ENCODE measurements at regions of chr7 and their contacts with region 1.

Region 1: DNA sequence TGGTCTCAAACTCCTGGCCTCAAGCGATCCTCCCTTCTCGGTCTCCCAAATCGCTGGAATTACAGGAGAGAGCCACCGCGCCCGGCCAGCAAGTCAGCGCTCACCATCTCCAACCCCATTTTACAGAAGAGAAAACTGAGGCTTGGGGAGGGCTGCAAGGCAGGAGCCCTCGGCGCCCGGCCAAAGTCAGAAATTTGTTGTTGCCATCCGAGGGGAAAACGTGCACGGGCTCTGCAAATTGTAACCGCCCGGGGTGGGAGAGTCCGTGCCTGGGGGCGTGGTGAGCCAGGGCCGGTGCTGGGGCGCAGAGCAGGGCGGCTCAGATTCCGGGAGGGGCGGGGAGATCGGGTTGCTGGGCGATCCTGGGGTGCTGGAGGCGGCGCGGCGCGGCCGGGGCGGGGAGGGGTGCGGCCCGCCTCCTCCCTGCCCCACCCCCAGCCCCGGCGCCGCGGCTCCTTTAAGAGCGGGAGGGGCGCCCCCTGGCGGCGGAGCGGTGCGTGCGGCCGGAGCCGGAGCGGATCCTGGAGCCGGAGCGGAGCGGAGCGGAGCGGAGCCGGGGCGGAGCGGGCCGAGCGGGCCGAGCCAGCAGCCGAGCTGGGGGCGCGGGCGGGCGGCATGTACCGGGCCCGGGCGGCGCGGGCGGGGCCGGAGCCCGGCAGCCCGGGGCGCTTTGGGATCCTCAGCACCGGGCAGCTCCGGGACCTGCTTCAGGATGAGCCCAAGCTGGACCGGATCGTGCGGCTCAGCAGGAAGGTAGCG is at the start of gene VPS37D:
- DNase-seq: peak; percentile 97 to 99 (median 99)
- ATAC-seq: peak; percentile 96
- H3K4me3 ChIP-seq: peak within 1 kb of the TSS; percentile 53
- H3K27ac ChIP-seq: no peak within 1 kb of the TSS
- H3K4me1 ChIP-seq: peaks cover 9 to 42% of the 10 kb centered on the region in 2 experiments
- H3K27me3 ChIP-seq: no peaks in the 10 kb centered on the region
- CTCF ChIP-seq: peak; percentile 48 to 96 (median 91)
- EP300 ChIP-seq: no peak
- POLR2A ChIP-seq: no peak
- RAD21 ChIP-seq: peak; percentile 86 to 88
- polyA plus RNA-seq, gene VPS37D: not detected

Region 2: DNA sequence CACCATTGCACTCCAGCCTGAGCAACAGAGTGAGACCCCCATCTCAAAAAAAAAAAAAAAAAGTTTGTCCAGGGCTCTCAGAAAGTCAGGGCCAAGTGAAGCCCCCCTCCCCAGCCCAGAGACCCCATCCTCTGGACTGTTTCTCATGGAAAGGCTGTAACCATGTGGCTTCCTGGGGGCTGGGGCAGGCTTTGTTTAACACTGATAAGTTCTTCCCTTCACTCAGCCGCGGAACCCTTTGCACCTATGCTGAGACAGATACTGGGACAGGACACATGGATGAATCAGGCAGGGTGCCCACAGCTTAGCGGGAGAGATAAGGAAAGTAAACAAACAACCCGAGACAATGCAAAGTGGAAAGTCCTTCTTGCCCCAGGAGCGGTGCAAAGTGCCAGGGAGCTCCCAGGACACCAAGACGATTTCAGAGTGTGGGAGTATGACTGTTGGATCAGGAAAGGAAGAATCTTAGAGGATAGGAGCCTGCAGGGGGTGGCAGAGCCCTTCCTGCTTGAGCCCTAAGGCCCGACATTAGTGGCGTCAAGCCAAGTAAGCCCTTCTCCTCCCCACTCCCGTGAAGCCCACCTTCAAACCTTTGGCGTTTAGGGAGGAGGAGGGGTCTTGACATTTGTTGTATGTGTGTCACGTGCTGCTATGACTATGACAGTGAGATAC is 54.8 kb before region 1 on chr7:
- CTCF ChIA-PET with region 1: interaction called, 24 read pairs
- POLR2A ChIA-PET with region 1: no interaction called
- in situ Hi-C with region 1: no loop called
- intact Hi-C with region 1: loop called (anchors 2 kb)
- DNase-seq: peak; percentile 73 to 94 (median 82)
- ATAC-seq: peak; percentile 85
- H3K4me3 ChIP-seq: no peak overlapping the region
- H3K27ac ChIP-seq: peak overlapping the region; percentile 8; the same call in 1 of the 3 replicates
- H3K4me1 ChIP-seq: peaks cover 22 to 30% of the 10 kb centered on the region in 2 experiments
- H3K27me3 ChIP-seq: no peaks in the 10 kb centered on the region
- CTCF ChIP-seq: peak; percentile 50 to 71 (median 70)
- EP300 ChIP-seq: peak; percentile 88
- POLR2A ChIP-seq: no peak
- RAD21 ChIP-seq: peak; percentile 78 to 81